ENCODE measurements at regions of chr11 and their contacts with region 1.

Region 1: DNA sequence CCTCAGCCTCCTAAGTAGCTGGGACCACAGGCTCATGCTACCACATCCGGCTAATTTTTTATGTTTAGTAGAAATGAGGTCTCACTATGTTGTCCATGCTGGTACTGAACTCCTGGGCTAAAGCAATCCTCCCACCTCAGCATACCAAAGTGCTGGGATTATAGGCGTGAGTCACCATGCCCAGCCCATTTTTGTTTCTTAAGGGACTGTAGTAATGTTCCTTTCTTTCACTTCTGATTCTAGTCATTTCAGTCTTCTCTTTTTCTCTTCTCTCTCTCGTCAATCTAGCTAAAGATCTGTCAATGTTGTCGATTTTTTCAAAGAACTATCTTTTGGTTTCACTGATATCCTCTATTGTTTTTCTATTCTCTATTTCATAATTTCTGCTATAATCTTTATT is 111.0 kb upstream of the APOA1 start:
- DNase-seq: peak in 1 of 9 donors; percentile 35
- ATAC-seq: peak; percentile 55
- H3K4me3 ChIP-seq: no peak overlapping the region
- H3K4me3 Mint-ChIP-seq: no peak overlapping the region
- H3K27ac ChIP-seq: no peak overlapping the region
- H3K27ac Mint-ChIP-seq: peak overlapping the region in 1 of 9 donors; percentile 54
- H3K4me1 ChIP-seq: peaks cover 0 to 9% of the 10 kb centered on the region in 2 donors
- H3K4me1 Mint-ChIP-seq: peaks cover 9 to 24% (median 16%) of the 10 kb centered on the region in 7 donors
- H3K27me3 ChIP-seq: no peaks in the 10 kb centered on the region
- H3K27me3 Mint-ChIP-seq: no peaks in the 10 kb centered on the region

Region 2: GRCh38 chr11:116901211-116901610 is 47.2 kb before region 1 on chr11:
- CTCF ChIA-PET with region 1: no interaction called
- POLR2A ChIA-PET with region 1: no interaction called
- intact Hi-C with region 1: no loop called
- DNase-seq: no peak
- ATAC-seq: no peak
- H3K4me3 ChIP-seq: no peak overlapping the region
- H3K4me3 Mint-ChIP-seq: no peak overlapping the region
- H3K27ac ChIP-seq: no peak overlapping the region
- H3K27ac Mint-ChIP-seq: peak overlapping the region in 6 of 9 donors; percentile 23 to 72 (median 40)
- H3K4me1 ChIP-seq: peaks cover 12 to 20% of the 10 kb centered on the region in 2 donors
- H3K4me1 Mint-ChIP-seq: peaks cover 19 to 44% (median 28%) of the 10 kb centered on the region in 7 donors
- H3K27me3 ChIP-seq: no peaks in the 10 kb centered on the region
- H3K27me3 Mint-ChIP-seq: no peaks in the 10 kb centered on the region

Region 3: GRCh38 chr11:116933961-116934360 is 14.4 kb before region 1 on chr11:
- CTCF ChIA-PET with region 1: interaction called, 3 read pairs
- POLR2A ChIA-PET with region 1: interaction called, 3 read pairs
- intact Hi-C with region 1: loop called in 1 of 2 experiments (anchors 2 kb)
- DNase-seq: no peak
- ATAC-seq: no peak
- H3K4me3 ChIP-seq: no peak overlapping the region
- H3K4me3 Mint-ChIP-seq: peak overlapping the region in 3 of 10 donors; percentile 19 to 44 (median 33)
- H3K27ac ChIP-seq: no peak overlapping the region
- H3K27ac Mint-ChIP-seq: peak overlapping the region in 8 of 9 donors; percentile 88 to 98 (median 93)
- H3K4me1 ChIP-seq: peaks cover 37 to 43% of the 10 kb centered on the region in 2 donors
- H3K4me1 Mint-ChIP-seq: peaks cover 34 to 60% (median 57%) of the 10 kb centered on the region in 7 donors
- H3K27me3 ChIP-seq: no peaks in the 10 kb centered on the region
- H3K27me3 Mint-ChIP-seq: no peaks in the 10 kb centered on the region

Measured in naive thymus-derived CD4-positive, alpha-beta T cell (primary cell).